Left colon (tissue), 2 donors: ENCODE measurements at regions of chr6 and their contacts with region 1.

Region 1: DNA sequence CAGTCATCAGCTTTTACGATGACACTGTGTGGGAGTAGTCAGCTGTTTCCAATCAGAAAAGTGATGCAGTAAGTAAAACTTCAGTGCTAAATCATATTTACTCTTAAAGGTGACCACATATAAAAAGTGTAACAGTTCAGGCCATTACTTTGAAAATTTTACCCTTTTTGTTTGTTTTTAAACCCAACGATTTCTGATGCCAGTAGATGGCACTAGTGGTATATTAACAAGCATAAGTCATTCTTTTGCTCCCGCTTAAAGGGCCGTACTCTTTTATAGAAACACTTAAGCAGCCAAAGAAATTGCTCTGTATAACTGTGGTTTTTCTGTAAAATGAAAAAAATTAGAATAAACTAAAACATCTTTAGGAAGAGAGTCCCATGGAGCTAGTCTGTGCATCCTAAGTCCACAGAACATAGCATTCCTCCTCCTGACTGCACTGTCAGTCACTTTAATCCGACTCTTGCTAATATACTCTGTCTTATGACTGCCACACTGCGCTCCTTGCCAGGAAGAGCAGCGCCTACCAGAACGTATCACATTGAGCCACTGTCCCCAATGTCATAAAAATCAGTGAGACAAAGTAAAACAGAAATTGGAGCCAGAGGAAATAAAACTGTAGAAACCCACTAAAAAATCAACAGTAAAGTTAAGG is 25.0 kb downstream of the HEBP2 start:
- DNase-seq: no peak
- ATAC-seq: peak; percentile 55

Region 2: GRCh38 chr6:138517635-138518034 is 88.6 kb after region 1 on chr6:
- intact Hi-C with region 1: loop called (anchors 5 to 10 kb)
- DNase-seq: peak; percentile 57 to 64
- ATAC-seq: peak; percentile 94

Region 3: GRCh38 chr6:138597336-138597735 is 168.3 kb after region 1 on chr6:
- intact Hi-C with region 1: loop called in 1 of 2 experiments (anchors 5 kb)
- DNase-seq: no peak
- ATAC-seq: no peak